ENCODE measurements at regions of chr5 and their contacts with region 1.

Region 1: GRCh38 chr5:173868076-173868880 is 19.9 kb upstream of the CPEB4 start:
- DNase-seq: peak; percentile 65 to 88 (median 77)
- H3K4me3 ChIP-seq: peak overlapping the region in 1 of 3 experiments; percentile 13
- H3K4me3 Mint-ChIP-seq: peak overlapping the region in 1 of 2 donors; percentile 1
- H3K27ac ChIP-seq: peak overlapping the region; percentile 50 to 92
- H3K27ac Mint-ChIP-seq: peak overlapping the region; percentile 84 to 99 (median 97)
- H3K4me1 ChIP-seq: peaks cover 80 to 83% of the 10 kb centered on the region in 2 donors
- H3K4me1 Mint-ChIP-seq: peaks cover 84% of the 10 kb centered on the region
- H3K27me3 ChIP-seq: no peaks in the 10 kb centered on the region
- H3K27me3 Mint-ChIP-seq: peaks cover 0 to 4% (median 0%) of the 10 kb centered on the region in 3 donors
- CTCF ChIP-seq: no peak

Region 2: DNA sequence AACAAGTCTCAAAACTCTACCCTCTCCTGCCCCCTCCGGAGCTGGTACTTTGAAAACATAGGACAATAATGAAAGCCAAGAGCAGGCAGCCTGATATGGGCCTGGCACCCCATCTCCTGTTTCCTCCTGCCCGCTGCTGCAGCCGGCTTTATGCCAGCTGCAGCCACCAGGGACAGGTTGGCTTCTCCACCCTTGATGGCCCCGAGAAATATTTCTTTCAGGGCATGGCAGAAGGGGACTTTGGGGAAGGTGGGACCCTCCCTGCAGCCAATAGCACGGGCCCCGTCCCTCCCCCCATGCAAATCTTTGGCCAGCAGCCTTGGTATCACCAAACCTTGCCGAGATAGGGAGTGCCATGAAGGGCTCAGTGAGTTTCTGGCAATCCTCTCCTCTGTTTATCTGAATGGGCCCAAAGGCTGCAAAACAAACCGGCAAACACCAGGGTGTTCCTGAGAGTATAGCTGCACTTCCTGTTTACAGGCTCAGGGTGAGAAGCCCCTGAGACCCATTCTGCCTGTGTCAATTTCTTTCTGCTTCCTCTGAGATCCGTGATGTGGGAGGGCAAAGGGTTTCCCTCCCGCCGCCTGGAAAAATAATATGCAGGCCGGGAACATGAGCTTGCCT is 178.4 kb before region 1 on chr5:
- intact Hi-C with region 1: no loop called
- DNase-seq: peak in 1 of 3 donors; percentile 9
- H3K4me3 ChIP-seq: no peak overlapping the region
- H3K4me3 Mint-ChIP-seq: no peak overlapping the region
- H3K27ac ChIP-seq: no peak overlapping the region
- H3K27ac Mint-ChIP-seq: peak overlapping the region in 1 of 7 donors; percentile 40
- H3K4me1 ChIP-seq: peaks cover 0 to 9% of the 10 kb centered on the region in 2 donors
- H3K4me1 Mint-ChIP-seq: peaks cover 14% of the 10 kb centered on the region
- H3K27me3 ChIP-seq: no peaks in the 10 kb centered on the region
- H3K27me3 Mint-ChIP-seq: peaks cover 0 to 2% (median 0%) of the 10 kb centered on the region in 3 donors
- CTCF ChIP-seq: no peak

Region 3: GRCh38 chr5:173736923-173737412 is 131.3 kb before region 1 on chr5:
- intact Hi-C with region 1: loop called in 1 of 2 experiments (anchors 10 kb)
- DNase-seq: peak; percentile 46 to 62 (median 52)
- H3K4me3 ChIP-seq: no peak overlapping the region
- H3K4me3 Mint-ChIP-seq: no peak overlapping the region
- H3K27ac ChIP-seq: no peak overlapping the region
- H3K27ac Mint-ChIP-seq: peak overlapping the region in 4 of 7 donors; percentile 33 to 81 (median 49)
- H3K4me1 ChIP-seq: peaks cover 20 to 36% of the 10 kb centered on the region in 2 donors
- H3K4me1 Mint-ChIP-seq: peaks cover 49% of the 10 kb centered on the region
- H3K27me3 ChIP-seq: no peaks in the 10 kb centered on the region
- H3K27me3 Mint-ChIP-seq: peaks cover 0 to 12% (median 0%) of the 10 kb centered on the region in 3 donors
- CTCF ChIP-seq: no peak

Region 4: DNA sequence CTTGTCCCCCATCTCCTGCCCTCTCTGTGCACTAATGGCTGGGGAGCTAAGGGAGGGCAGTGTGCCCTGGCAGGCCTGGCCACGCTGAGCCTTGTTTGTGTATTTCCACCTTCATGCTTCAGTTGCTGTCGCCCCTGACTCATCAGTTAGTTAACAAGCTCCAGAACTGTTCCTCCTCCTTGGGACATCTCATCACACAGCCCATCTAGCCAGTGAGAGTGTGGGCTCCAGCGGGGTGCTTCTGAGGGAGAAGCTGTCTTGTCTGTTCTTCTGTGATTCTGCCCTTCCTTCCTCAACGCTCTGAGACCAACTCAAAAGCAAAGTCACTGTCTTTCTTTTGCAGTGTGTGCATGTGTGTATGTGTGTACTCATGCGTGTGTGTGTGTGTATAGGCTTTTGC is 38.5 kb before region 1 on chr5:
- intact Hi-C with region 1: no loop called
- DNase-seq: peak; percentile 13 to 48 (median 44)
- H3K4me3 ChIP-seq: no peak overlapping the region
- H3K4me3 Mint-ChIP-seq: no peak overlapping the region
- H3K27ac ChIP-seq: peak overlapping the region; percentile 12 to 22
- H3K27ac Mint-ChIP-seq: peak overlapping the region in 3 of 7 donors; percentile 34 to 82 (median 76)
- H3K4me1 ChIP-seq: peaks cover 45 to 50% of the 10 kb centered on the region in 2 donors
- H3K4me1 Mint-ChIP-seq: peaks cover 53% of the 10 kb centered on the region
- H3K27me3 ChIP-seq: no peaks in the 10 kb centered on the region
- H3K27me3 Mint-ChIP-seq: no peaks in the 10 kb centered on the region
- CTCF ChIP-seq: no peak

Region 5: GRCh38 chr5:173880306-173880946 is 12.1 kb after region 1 on chr5:
- intact Hi-C with region 1: loop called in 1 of 2 experiments (anchors 2 kb)
- DNase-seq: no peak
- H3K4me3 ChIP-seq: no peak overlapping the region
- H3K4me3 Mint-ChIP-seq: no peak overlapping the region
- H3K27ac ChIP-seq: no peak overlapping the region
- H3K27ac Mint-ChIP-seq: no peak overlapping the region
- H3K4me1 ChIP-seq: peaks cover 17 to 20% of the 10 kb centered on the region in 2 donors
- H3K4me1 Mint-ChIP-seq: peaks cover 16% of the 10 kb centered on the region
- H3K27me3 ChIP-seq: no peaks in the 10 kb centered on the region
- H3K27me3 Mint-ChIP-seq: no peaks in the 10 kb centered on the region
- CTCF ChIP-seq: no peak